AG04450 (cell line): ENCODE measurements at regions of chr15 and their contacts with region 1.

Region 1: GRCh38 chr15:90931737-90932659 is at the start of gene HDDC3:
- DNase-seq: peak; percentile 58
- H3K4me3 ChIP-seq: peak within 1 kb of the TSS; percentile 91
- H3K27ac ChIP-seq: peak within 1 kb of the TSS; percentile 11
- H3K27me3 ChIP-seq: no peaks in the 10 kb centered on the region
- CTCF ChIP-seq: peak; percentile 90
- polyA plus RNA-seq, gene HDDC3: 10.0 and 10.3 TPM in 2 replicates

Region 2: DNA sequence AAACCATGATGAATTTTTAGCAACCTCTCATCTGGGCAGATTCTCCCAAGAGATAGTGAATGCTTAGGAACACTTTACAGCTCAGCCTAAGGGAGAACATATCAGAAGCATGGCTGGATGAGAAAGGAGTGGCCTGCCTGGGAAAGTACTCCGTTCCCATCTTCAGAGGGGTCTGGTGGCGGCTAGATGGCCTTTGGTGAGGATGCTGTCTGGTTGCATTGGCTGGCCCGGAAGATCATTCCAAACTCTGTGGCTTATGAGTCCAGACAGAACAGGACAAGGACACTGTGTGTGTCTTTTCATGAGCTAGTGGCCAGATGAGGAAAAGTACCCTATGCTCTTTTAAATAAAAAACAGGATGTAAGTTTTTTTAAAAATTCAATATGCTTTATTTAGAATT is 351.1 kb before region 1 on chr15:
- CTCF ChIA-PET with region 1: no interaction called
- POLR2A ChIA-PET with region 1: no interaction called
- DNase-seq: no peak
- H3K4me3 ChIP-seq: no peak overlapping the region
- H3K27ac ChIP-seq: no peak overlapping the region
- H3K27me3 ChIP-seq: no peaks in the 10 kb centered on the region
- CTCF ChIP-seq: no peak

Region 3: DNA sequence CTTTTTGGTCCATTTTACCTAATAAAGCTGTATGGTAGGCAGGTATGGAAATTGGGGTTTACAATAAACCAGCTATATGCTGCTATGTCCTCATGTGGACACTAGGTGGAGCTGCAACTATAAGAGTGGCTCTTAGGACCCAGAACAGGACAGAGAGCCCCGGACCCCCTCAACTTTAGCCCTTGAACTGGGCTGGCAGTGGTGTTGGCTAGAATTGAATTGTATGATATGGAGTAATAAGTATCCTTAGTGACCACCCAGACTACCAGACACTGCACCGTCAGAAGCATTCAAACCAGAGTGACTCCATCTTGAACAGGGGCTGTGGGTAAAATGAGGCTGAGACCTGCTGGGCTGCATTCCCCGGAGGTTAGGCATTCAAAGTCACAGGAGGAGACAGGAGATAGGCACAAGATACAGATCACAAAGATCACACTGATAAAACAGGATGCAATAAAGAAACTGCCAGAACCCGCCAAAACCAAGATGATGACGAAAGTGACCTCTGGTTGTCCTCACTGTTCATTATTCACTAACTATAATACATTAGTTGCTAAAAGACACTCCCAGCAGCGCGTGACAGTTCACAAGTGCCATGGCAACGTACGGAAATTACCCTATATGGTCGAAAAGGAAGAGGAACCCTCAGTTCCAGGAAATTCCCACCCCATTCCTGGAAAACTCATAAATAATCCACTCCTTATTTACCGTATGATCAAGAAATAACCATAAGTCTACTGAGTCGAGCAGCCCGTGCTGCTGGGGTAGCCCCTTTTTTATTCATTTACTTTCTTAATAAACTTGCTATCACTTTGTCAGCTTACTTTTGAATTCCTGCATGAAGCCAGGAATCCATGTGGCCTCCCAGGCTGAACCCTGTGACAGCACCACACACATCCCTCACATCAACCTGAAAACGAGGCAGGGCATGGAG is 283.6 kb before region 1 on chr15:
- CTCF ChIA-PET with region 1: interaction called, 52 read pairs
- POLR2A ChIA-PET with region 1: no interaction called
- DNase-seq: peak; percentile 42
- H3K4me3 ChIP-seq: no peak overlapping the region
- H3K27ac ChIP-seq: peak overlapping the region; percentile 21
- H3K27me3 ChIP-seq: no peaks in the 10 kb centered on the region
- CTCF ChIP-seq: peak; percentile 88

Region 4: DNA sequence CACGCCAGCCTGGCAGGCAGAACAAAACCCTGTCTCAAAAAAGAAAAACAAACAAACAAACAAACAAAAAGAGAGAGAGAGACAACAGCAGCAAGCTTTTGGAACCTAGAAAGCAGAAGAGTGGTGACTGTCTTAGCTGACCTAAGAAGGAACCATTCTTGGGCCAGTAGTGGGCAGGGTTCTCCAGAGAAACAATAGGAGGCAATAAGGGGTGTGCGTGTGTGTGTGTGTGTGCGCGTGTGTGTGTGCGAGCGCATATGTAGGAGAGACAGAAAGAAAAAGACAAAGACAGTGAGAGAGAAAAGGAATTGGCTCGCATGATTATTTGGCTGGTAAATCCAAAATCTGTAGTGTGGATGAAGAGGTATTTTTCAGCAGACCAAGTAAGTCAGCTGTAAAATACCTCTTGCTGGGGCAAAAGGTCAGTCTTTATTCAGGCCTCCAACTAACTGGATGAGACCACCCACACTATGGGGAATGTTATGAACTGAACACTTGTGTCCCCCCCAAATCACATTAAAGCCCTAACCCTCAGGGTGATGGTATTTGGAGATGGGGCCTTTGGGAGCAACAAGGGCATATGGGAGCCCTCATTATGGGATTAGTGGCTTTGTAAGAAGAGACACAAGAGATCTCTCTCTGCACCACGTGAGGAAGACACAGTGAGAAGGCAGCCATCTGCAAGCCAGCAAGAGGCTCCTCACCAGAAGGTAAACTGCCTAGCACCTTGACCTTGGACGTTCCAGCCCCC is 229.9 kb before region 1 on chr15:
- CTCF ChIA-PET with region 1: no interaction called
- POLR2A ChIA-PET with region 1: no interaction called
- DNase-seq: no peak
- H3K4me3 ChIP-seq: no peak overlapping the region
- H3K27ac ChIP-seq: no peak overlapping the region
- H3K27me3 ChIP-seq: no peaks in the 10 kb centered on the region
- CTCF ChIP-seq: no peak

Region 5: DNA sequence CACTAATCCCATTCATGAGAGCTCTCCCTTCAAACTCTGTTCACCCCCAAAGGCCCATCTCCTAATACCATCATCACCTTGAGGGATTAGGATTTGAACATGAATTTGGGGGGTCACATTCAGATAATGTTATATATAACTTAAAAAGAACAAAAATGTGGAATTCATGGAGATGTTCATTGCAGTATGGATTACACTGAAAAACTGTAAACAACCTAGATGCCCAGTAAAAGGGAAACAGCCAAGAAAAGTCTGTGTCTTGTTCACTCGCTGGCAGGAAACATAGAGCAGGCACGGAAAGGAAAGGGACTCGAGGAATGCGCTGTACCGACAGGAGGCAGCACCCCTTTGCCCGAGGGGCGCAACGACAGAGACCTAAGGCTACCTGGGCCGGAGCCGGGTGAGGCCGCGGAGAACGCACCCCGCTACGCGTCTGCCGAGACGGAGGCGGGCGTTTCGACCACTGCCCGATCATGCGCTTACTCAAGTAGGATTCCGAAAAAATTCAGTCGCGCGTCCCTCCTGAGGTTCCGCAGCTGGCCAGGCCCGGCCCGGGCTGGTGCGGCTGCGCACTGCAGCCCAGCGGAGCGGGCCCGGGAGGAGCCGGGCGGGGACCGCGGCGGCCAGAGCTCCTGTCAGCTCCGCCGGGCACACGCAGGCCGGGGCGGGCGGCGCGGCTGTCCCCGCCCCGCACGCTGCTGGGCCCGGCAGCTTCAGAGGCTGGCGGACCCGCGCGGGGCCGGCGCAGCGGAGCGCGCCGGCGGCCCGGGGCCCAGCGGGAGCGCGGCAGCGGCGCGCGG is 29.8 kb before region 1 on chr15:
- CTCF ChIA-PET with region 1: interaction called, 98 read pairs
- POLR2A ChIA-PET with region 1: interaction called, 7 read pairs
- DNase-seq: no peak
- H3K4me3 ChIP-seq: peak overlapping the region; percentile 77
- H3K27ac ChIP-seq: peak overlapping the region; percentile 81
- H3K27me3 ChIP-seq: no peaks in the 10 kb centered on the region
- CTCF ChIP-seq: peak; percentile 82

Region 6: DNA sequence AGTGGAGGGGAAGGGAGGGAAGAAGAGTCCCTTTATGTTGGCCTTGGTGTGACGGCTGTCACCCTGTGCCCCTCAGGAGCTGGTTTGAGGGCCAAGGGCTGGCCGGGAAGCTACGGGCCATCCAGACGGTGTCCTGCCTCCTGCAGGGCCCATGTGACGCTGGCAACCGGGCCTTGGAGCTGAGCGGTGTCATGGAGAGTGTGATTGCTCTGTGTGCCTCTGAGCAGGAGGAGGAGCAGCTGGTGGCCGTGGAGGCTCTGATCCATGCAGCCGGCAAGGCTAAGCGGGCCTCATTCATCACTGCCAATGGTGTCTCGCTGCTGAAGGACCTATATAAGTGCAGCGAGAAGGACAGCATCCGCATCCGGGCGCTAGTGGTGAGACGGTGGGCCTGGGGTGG is 14.5 kb after region 1 on chr15:
- CTCF ChIA-PET with region 1: interaction called, 27 read pairs
- POLR2A ChIA-PET with region 1: interaction called, 4 read pairs
- DNase-seq: no peak
- H3K4me3 ChIP-seq: no peak overlapping the region
- H3K27ac ChIP-seq: no peak overlapping the region
- H3K27me3 ChIP-seq: no peaks in the 10 kb centered on the region
- CTCF ChIP-seq: no peak

Region 7: GRCh38 chr15:90982135-90982534 is 50.1 kb after region 1 on chr15:
- CTCF ChIA-PET with region 1: interaction called, 13 read pairs
- POLR2A ChIA-PET with region 1: no interaction called
- DNase-seq: no peak
- H3K4me3 ChIP-seq: no peak overlapping the region
- H3K27ac ChIP-seq: no peak overlapping the region
- H3K27me3 ChIP-seq: no peaks in the 10 kb centered on the region
- CTCF ChIP-seq: no peak